ENCODE measurements at regions of chr2 and their contacts with region 1.

Region 1: DNA sequence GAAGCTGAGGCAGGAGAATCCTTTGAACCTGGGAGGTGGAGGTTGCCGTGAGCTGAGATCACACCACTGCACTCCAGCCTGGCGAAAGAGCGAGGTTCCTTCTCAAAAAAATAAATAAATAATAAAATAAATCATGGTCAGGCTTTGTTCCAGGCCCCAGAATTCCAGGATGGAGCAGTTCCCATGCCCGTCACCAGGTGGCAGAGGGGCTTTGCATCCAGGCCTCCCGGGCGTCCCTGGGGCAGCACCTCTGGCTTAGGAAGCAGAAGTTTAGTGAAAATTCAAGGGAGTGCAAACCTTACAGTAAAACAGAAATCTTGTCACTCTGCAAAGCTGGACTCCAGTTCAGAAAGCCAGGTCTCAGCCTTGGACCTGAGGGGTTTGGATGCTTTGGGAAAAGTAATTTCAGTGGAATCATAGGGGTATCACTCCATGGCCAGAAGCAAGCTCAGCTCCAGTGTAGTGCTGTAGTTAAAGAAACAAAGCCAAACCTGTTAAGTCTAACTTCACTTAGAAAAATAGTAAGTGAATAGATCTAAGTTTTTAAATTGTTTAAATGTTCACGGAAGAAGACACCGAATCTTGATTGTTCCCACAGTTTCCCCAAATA is 512.7 kb downstream of the CMPK2 start:
- DNase-seq: peak in 1 of 2 experiments; percentile 25
- H3K4me3 ChIP-seq: no peak overlapping the region
- H3K27ac ChIP-seq: no peak overlapping the region
- H3K4me1 ChIP-seq: no peaks in the 10 kb centered on the region
- H3K27me3 ChIP-seq: peaks cover 11% of the 10 kb centered on the region; the same call in 1 of the 2 replicates
- CTCF ChIP-seq: peak; percentile 73

Region 2: GRCh38 chr2:6773007-6773693 is 420.1 kb after region 1 on chr2:
- CTCF ChIA-PET with region 1: no interaction called
- POLR2A ChIA-PET with region 1: no interaction called
- intact Hi-C with region 1: loop called (anchors 1 kb)
- DNase-seq: peak in 1 of 2 experiments; percentile 43
- H3K4me3 ChIP-seq: no peak overlapping the region
- H3K27ac ChIP-seq: no peak overlapping the region
- H3K4me1 ChIP-seq: no peaks in the 10 kb centered on the region
- H3K27me3 ChIP-seq: peaks cover 51% of the 10 kb centered on the region
- CTCF ChIP-seq: peak; percentile 97

Measured in PC-9 (cell line).